Caco-2 (cell line): ENCODE measurements at regions of chr13 and their contacts with region 1.

Region 1: DNA sequence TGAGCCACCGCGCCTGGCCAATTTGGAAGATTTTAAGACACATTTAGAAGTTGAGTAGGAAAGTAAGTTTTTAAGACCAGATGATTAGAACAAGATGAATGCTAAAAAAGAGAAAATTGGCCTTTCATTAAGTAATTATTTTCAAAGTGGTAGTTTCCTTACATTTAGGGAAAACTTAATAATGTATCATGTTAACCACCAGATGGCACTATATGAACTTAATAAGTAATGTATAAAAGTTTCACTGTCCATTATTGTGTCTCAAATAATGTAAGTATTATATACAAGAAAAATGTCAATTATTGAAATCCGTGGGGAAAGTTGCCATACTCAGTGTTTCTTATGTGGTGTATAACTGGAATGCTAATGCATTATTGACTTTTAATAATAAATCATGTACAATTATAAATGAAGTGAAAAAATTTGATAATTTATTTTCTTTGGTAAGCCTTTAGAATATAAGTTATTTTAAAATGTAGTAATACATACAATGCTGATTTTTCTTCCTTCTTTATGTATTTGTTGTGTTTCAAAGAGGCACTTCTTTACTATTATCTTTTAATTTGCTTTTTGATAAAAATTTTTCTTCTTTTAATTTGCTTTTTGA is 29.2 kb downstream of the COG6 start:
- DNase-seq: no peak
- H3K4me3 ChIP-seq: no peak overlapping the region
- H3K4me3 Mint-ChIP-seq: no peak overlapping the region
- H3K27ac Mint-ChIP-seq: no peak overlapping the region
- H3K4me1 ChIP-seq: peaks cover 9% of the 10 kb centered on the region; the same call in 1 of the 2 replicates
- H3K4me1 Mint-ChIP-seq: peaks cover 9% of the 10 kb centered on the region
- H3K27me3 ChIP-seq: no peaks in the 10 kb centered on the region
- H3K27me3 Mint-ChIP-seq: no peaks in the 10 kb centered on the region
- CTCF ChIP-seq: peak in 1 of 2 experiments; percentile 29

Region 2: GRCh38 chr13:39803179-39803578 is 118.5 kb after region 1 on chr13:
- CTCF ChIA-PET with region 1: no interaction called
- POLR2A ChIA-PET with region 1: no interaction called
- intact Hi-C with region 1: loop called (anchors 10 kb)
- DNase-seq: peak; percentile 84 to 87
- H3K4me3 ChIP-seq: no peak overlapping the region
- H3K4me3 Mint-ChIP-seq: no peak overlapping the region
- H3K27ac Mint-ChIP-seq: peak overlapping the region; percentile 74
- H3K4me1 ChIP-seq: peaks cover 14% of the 10 kb centered on the region
- H3K4me1 Mint-ChIP-seq: peaks cover 29% of the 10 kb centered on the region
- H3K27me3 ChIP-seq: no peaks in the 10 kb centered on the region
- H3K27me3 Mint-ChIP-seq: no peaks in the 10 kb centered on the region
- CTCF ChIP-seq: no peak

Region 3: GRCh38 chr13:40682449-40683240 is 998.0 kb after region 1 on chr13:
- CTCF ChIA-PET with region 1: no interaction called
- POLR2A ChIA-PET with region 1: no interaction called
- intact Hi-C with region 1: loop called (anchors 2 kb)
- DNase-seq: no peak
- H3K4me3 ChIP-seq: no peak overlapping the region
- H3K4me3 Mint-ChIP-seq: no peak overlapping the region
- H3K27ac Mint-ChIP-seq: no peak overlapping the region
- H3K4me1 ChIP-seq: peaks cover 15% of the 10 kb centered on the region
- H3K4me1 Mint-ChIP-seq: peaks cover 18% of the 10 kb centered on the region
- H3K27me3 ChIP-seq: no peaks in the 10 kb centered on the region
- H3K27me3 Mint-ChIP-seq: no peaks in the 10 kb centered on the region
- CTCF ChIP-seq: peak; percentile 36 to 71

Region 4: GRCh38 chr13:40777166-40777808 is 1092.7 kb after region 1 on chr13:
- CTCF ChIA-PET with region 1: interaction called, 3 read pairs
- POLR2A ChIA-PET with region 1: no interaction called
- intact Hi-C with region 1: loop called (anchors 1 kb)
- DNase-seq: peak in 1 of 2 experiments; percentile 73
- H3K4me3 ChIP-seq: peak overlapping the region; percentile 28
- H3K4me3 Mint-ChIP-seq: peak overlapping the region; percentile 39
- H3K27ac Mint-ChIP-seq: no peak overlapping the region
- H3K4me1 ChIP-seq: peaks cover 19% of the 10 kb centered on the region
- H3K4me1 Mint-ChIP-seq: peaks cover 13% of the 10 kb centered on the region
- H3K27me3 ChIP-seq: no peaks in the 10 kb centered on the region
- H3K27me3 Mint-ChIP-seq: no peaks in the 10 kb centered on the region
- CTCF ChIP-seq: peak; percentile 82 to 92